ENCODE measurements at regions of chr7 and their contacts with region 1.

Region 1: GRCh38 chr7:106071356-106071998 is 40.6 kb downstream of the SYPL1 start:
- DNase-seq: peak; percentile 86
- H3K4me3 Mint-ChIP-seq: peak overlapping the region; percentile 79
- H3K27ac Mint-ChIP-seq: peak overlapping the region; percentile 97
- H3K4me1 Mint-ChIP-seq: peaks cover 39% of the 10 kb centered on the region
- H3K27me3 Mint-ChIP-seq: no peaks in the 10 kb centered on the region

Region 2: DNA sequence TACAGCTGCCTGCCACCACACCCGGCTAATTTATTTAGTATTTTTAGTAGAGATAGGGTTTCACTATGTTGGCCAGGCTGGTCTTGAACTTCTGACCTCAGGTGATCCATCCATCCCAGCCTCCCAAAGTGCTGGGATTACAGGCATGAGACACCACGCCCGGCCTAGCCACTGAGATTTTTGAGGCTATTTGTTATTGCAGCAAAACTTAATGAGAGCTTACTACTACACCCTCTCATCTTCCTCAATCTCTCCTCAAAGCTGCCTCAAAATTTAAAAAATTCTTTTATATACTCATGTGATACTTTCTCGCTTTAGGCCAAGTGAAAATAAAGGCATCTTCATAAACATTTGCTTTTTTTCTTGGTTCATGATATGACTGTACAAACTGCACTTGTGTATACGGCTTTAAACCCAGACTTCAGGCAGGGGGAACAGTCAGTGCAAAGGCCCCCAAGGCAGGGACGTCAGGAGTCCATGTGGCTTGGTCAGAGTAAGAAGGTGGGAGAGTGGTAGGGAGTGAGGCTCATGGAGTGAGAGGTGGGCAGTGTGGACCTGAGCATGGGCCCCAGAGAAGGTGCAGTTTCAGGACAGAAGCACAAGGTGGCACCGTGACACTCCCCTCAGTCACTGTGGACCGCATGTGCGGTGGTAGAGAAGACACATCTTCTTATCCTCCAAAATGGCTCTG is 14.8 kb before region 1 on chr7:
- intact Hi-C with region 1: no loop called
- DNase-seq: peak; percentile 90
- H3K4me3 Mint-ChIP-seq: no peak overlapping the region
- H3K27ac Mint-ChIP-seq: no peak overlapping the region
- H3K4me1 Mint-ChIP-seq: peaks cover 28% of the 10 kb centered on the region
- H3K27me3 Mint-ChIP-seq: peaks cover 10% of the 10 kb centered on the region

Region 3: GRCh38 chr7:106112117-106112971 is 40.9 kb after region 1 on chr7 and contains the start of gene SYPL1:
- intact Hi-C with region 1: loop called (anchors 1 kb)
- DNase-seq: peak; percentile 97
- H3K4me3 Mint-ChIP-seq: peak within 1 kb of the TSS; percentile 86
- H3K27ac Mint-ChIP-seq: peak within 1 kb of the TSS; percentile 92
- H3K4me1 Mint-ChIP-seq: peaks cover 44% of the 10 kb centered on the region
- H3K27me3 Mint-ChIP-seq: peaks cover 3% of the 10 kb centered on the region
- total RNA-seq, gene SYPL1: 26.6 and 27.2 TPM in 2 replicates

Region 4: DNA sequence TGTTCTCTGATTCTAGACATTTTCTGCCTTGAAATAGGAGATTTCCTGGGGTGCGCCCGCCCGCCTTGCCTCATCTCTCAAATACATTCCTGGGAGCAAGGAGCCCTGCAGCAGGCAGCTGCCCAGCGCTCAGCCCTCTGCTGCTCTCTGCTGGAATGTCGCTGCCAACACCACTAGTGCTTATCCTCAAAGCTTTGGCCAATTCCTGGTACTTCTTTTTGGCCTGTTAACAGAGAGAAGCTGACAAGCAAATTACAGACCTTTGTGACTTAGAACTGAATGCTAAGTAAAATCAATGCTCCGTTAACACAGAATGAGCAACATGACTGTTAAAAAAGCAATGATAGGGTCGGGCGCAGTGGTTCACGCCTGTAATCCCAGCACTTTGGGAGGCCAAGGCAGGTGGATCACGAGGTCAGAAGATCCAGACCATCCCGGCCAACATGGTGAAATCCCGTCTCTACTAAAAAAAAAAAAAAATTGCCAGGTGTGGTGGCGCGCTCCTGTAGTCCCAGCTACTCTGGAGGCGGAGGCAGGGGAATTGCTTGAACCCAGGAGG is 82.5 kb after region 1 on chr7:
- intact Hi-C with region 1: loop called (anchors 5 kb)
- DNase-seq: peak; percentile 91
- H3K4me3 Mint-ChIP-seq: no peak overlapping the region
- H3K27ac Mint-ChIP-seq: no peak overlapping the region
- H3K4me1 Mint-ChIP-seq: peaks cover 12% of the 10 kb centered on the region
- H3K27me3 Mint-ChIP-seq: peaks cover 34% of the 10 kb centered on the region

Measured in activated CD4-positive, alpha-beta T cell treated with anti-CD3 and anti-CD28 coated beads, Interleukin-2, amount 10 ng/mL, durations not matched to agents 24 days and 14 days (primary cell).